Naive thymus-derived CD4-positive, alpha-beta T cell (primary cell): ENCODE measurements at regions of chr3 and their contacts with region 1.

Region 1: GRCh38 chr3:128497387-128498126 is 4.6 kb upstream of the GATA2 start:
- DNase-seq: peak; percentile 55 to 86 (median 72)
- ATAC-seq: peak; percentile 75
- H3K4me3 ChIP-seq: peak overlapping the region; percentile 5
- H3K4me3 Mint-ChIP-seq: peak overlapping the region; percentile 69 to 85 (median 77)
- H3K27ac ChIP-seq: no peak overlapping the region
- H3K27ac Mint-ChIP-seq: peak overlapping the region in 2 of 9 donors; percentile 41 to 62
- H3K4me1 ChIP-seq: peaks cover 0 to 4% of the 10 kb centered on the region in 2 donors
- H3K4me1 Mint-ChIP-seq: peaks cover 4 to 14% (median 9%) of the 10 kb centered on the region in 7 donors
- H3K27me3 ChIP-seq: peaks cover 0 to 5% of the 10 kb centered on the region in 2 donors
- H3K27me3 Mint-ChIP-seq: peaks cover 54 to 69% (median 59%) of the 10 kb centered on the region in 5 donors

Region 2: DNA sequence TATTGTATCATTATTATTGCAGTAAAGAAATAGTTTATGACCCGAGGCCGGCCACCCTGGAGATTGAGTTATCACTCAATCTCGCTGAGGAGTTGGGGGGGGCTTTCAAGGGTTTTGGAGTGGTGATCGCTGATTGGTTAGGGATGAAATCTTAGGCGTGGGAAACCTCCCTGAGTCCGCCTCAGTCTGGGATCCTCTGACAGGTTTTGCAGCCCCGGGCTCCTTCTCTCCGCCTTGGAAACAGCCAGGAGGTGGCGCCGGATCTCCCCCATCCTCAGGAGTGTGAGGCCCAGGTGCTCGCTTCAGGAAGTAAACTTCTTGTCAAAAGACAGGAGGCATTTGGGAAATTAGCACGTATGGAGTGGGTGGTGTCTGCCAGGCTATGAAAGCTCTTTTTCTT is 486.4 kb before region 1 on chr3:
- CTCF ChIA-PET with region 1: no interaction called
- POLR2A ChIA-PET with region 1: no interaction called
- intact Hi-C with region 1: loop called in 1 of 2 experiments (anchors 5 kb)
- DNase-seq: no peak
- ATAC-seq: no peak
- H3K4me3 ChIP-seq: no peak overlapping the region
- H3K4me3 Mint-ChIP-seq: no peak overlapping the region
- H3K27ac ChIP-seq: no peak overlapping the region
- H3K27ac Mint-ChIP-seq: no peak overlapping the region
- H3K4me1 ChIP-seq: no peaks in the 10 kb centered on the region
- H3K4me1 Mint-ChIP-seq: peaks cover 0 to 4% (median 4%) of the 10 kb centered on the region in 7 donors
- H3K27me3 ChIP-seq: no peaks in the 10 kb centered on the region
- H3K27me3 Mint-ChIP-seq: peaks cover 0 to 16% (median 4%) of the 10 kb centered on the region in 5 donors

Region 3: GRCh38 chr3:128095222-128095703 is 402.3 kb before region 1 on chr3:
- CTCF ChIA-PET with region 1: interaction called, 3 read pairs
- POLR2A ChIA-PET with region 1: no interaction called
- intact Hi-C with region 1: loop called (anchors 1 kb)
- DNase-seq: peak; percentile 51 to 79 (median 73)
- ATAC-seq: peak; percentile 99
- H3K4me3 ChIP-seq: no peak overlapping the region
- H3K4me3 Mint-ChIP-seq: no peak overlapping the region
- H3K27ac ChIP-seq: no peak overlapping the region
- H3K27ac Mint-ChIP-seq: peak overlapping the region in 4 of 9 donors; percentile 16 to 68 (median 36)
- H3K4me1 ChIP-seq: no peaks in the 10 kb centered on the region
- H3K4me1 Mint-ChIP-seq: peaks cover 1 to 18% (median 6%) of the 10 kb centered on the region in 7 donors
- H3K27me3 ChIP-seq: no peaks in the 10 kb centered on the region
- H3K27me3 Mint-ChIP-seq: no peaks in the 10 kb centered on the region

Region 4: GRCh38 chr3:128226795-128227395 is 270.7 kb before region 1 on chr3:
- CTCF ChIA-PET with region 1: no interaction called
- POLR2A ChIA-PET with region 1: no interaction called
- intact Hi-C with region 1: loop called in 1 of 2 experiments (anchors 10 kb)
- DNase-seq: peak in 6 of 9 donors; percentile 8 to 38 (median 20)
- ATAC-seq: peak; percentile 53
- H3K4me3 ChIP-seq: no peak overlapping the region
- H3K4me3 Mint-ChIP-seq: no peak overlapping the region
- H3K27ac ChIP-seq: no peak overlapping the region
- H3K27ac Mint-ChIP-seq: peak overlapping the region in 7 of 9 donors; percentile 32 to 62 (median 45)
- H3K4me1 ChIP-seq: no peaks in the 10 kb centered on the region
- H3K4me1 Mint-ChIP-seq: peaks cover 0 to 45% (median 26%) of the 10 kb centered on the region in 7 donors
- H3K27me3 ChIP-seq: no peaks in the 10 kb centered on the region
- H3K27me3 Mint-ChIP-seq: no peaks in the 10 kb centered on the region

Region 5: DNA sequence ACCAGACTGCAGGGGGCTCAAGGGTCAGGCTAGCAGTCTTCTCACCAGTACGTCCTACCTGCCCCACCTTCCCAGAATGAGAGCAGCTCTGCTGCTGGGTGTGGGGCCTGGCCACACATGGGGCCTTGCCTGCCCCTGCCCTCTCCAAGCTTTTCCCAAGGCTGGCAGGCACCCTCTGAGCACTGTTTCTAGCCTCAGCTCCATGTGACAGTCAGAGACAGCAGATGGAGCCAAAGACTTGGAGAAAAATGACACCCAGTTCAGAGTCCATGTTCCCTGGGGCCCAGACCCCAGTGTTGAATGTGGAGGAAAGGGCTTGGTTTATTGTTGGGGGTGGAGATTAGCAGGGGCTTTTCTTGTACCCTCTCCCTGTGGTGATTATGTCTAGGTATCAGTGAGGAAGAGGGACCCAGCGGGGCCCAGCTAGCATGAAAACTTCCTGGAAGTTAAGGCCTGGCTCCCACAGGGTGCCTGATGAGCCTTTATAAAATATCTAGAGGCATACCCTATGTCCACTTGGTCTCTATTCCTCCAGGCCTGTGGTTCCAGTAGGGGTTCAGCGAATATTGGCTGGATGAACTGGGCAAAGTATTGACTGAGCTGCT is 190.4 kb before region 1 on chr3:
- CTCF ChIA-PET with region 1: interaction called, 4 read pairs
- POLR2A ChIA-PET with region 1: no interaction called
- intact Hi-C with region 1: loop called in 1 of 2 experiments (anchors 2 kb)
- DNase-seq: peak in 4 of 9 donors; percentile 9 to 35 (median 31)
- ATAC-seq: peak; percentile 50
- H3K4me3 ChIP-seq: no peak overlapping the region
- H3K4me3 Mint-ChIP-seq: peak overlapping the region in 1 of 10 donors; percentile 34
- H3K27ac ChIP-seq: no peak overlapping the region
- H3K27ac Mint-ChIP-seq: peak overlapping the region in 5 of 9 donors; percentile 15 to 68 (median 21)
- H3K4me1 ChIP-seq: peaks cover 0 to 6% of the 10 kb centered on the region in 2 donors
- H3K4me1 Mint-ChIP-seq: peaks cover 0 to 51% (median 35%) of the 10 kb centered on the region in 7 donors
- H3K27me3 ChIP-seq: no peaks in the 10 kb centered on the region
- H3K27me3 Mint-ChIP-seq: no peaks in the 10 kb centered on the region

Region 6: DNA sequence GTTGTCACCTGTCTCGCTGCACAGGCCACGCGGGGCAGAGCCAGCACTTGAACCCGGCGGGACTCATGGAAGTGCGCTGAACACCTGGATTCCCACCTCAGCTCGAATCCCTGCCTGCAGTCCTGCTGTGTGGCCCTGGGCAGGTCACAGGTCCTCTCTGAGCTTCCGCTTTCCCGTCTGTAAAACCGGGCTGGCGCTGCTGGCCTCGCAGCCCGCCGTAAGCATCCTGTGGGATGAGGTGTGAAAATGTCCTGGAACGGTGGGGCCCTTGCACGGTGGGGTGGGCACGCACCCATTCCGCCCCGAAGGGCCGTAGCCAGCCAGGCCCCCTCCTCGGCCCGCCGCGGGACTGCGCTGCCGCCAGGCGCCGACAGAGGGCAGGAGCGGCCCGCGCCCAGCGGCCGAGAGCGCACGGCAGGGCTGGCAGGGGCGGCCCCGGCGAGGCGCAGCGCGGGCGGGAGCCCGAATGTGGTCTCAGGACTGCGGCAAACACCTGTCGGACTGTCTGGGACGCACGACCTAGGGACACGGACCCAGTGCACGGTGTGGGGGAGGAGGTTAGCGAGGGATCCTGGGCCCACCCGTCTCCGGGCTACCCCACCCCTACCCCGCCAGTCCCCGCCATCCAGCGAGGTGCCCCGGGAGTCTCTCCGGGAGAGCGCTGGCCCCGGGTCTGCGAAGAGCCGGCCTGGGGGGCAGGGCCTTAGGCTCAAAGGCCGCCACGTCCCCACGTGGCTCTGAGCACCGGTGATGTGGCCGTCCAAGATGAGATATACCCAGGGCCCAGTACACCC is 71.2 kb before region 1 on chr3:
- CTCF ChIA-PET with region 1: interaction called, 21 read pairs
- POLR2A ChIA-PET with region 1: no interaction called
- intact Hi-C with region 1: loop called (anchors 1 kb)
- DNase-seq: peak; percentile 23 to 81 (median 61)
- ATAC-seq: peak; percentile 93
- H3K4me3 ChIP-seq: no peak overlapping the region
- H3K4me3 Mint-ChIP-seq: peak overlapping the region in 1 of 10 donors; percentile 19
- H3K27ac ChIP-seq: no peak overlapping the region
- H3K27ac Mint-ChIP-seq: no peak overlapping the region
- H3K4me1 ChIP-seq: no peaks in the 10 kb centered on the region
- H3K4me1 Mint-ChIP-seq: peaks cover 0 to 4% (median 0%) of the 10 kb centered on the region in 7 donors
- H3K27me3 ChIP-seq: no peaks in the 10 kb centered on the region
- H3K27me3 Mint-ChIP-seq: peaks cover 9 to 35% (median 22%) of the 10 kb centered on the region in 5 donors

Region 7: GRCh38 chr3:128617557-128618397 is 120.2 kb after region 1 on chr3:
- CTCF ChIA-PET with region 1: no interaction called
- POLR2A ChIA-PET with region 1: no interaction called
- intact Hi-C with region 1: no loop called
- DNase-seq: peak; percentile 94 to 100 (median 99)
- ATAC-seq: peak; percentile 96
- H3K4me3 ChIP-seq: peak overlapping the region; percentile 99
- H3K4me3 Mint-ChIP-seq: peak overlapping the region; percentile 94 to 99 (median 97)
- H3K27ac ChIP-seq: peak overlapping the region; percentile 88
- H3K27ac Mint-ChIP-seq: peak overlapping the region; percentile 92 to 98 (median 97)
- H3K4me1 ChIP-seq: peaks cover 16 to 19% of the 10 kb centered on the region in 2 donors
- H3K4me1 Mint-ChIP-seq: peaks cover 10 to 36% (median 33%) of the 10 kb centered on the region in 7 donors
- H3K27me3 ChIP-seq: no peaks in the 10 kb centered on the region
- H3K27me3 Mint-ChIP-seq: no peaks in the 10 kb centered on the region